Activated B cell treated with CpG ODN at 0.5 μM for 24 hours (primary cell): ENCODE measurements at regions of chr16 and their contacts with region 1.

Region 1: DNA sequence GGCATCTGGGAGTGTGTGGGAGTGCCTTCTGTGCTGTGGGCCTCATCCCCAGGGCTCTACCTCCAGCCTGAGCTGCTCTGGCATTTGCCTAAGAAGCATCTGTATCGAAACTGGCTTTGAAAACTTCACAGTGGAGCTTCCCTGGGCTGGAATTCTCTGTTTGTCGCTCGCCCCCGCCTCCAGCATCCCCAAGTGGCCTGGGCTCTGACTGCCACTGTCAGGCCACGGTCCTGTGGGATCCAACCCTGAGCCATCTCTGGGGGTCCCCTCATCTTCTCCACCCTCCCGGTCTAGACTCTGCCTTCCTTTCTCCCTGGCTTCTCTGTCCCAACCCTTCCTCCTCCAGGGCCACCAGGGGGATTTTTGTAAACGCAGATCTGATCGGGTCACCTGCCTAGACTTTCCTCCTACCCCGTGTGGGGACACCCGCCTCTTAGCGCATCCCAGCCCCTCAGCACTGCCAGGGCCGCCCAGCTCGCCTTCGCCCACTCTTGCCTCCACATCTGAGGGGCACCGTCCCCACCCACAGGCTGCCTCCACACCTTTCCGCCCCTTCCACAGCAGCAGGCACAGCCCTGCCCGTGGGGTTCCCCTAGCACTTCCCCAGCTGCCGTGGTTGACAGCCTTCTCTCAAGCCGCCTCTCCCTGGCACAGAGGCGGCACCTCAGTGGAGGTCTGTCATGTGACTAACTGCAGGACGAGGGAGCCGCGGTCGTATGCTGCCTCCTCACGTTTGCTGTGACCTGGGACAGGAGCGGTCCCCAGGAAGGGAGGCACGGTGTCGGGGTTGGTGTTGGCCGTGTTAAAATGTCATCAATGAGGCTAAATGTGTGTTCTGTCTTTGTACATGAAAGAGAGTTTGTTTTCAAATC is 12.0 kb downstream of the TBC1D24 start:
- DNase-seq: peak; percentile 73
- ATAC-seq: peak; percentile 97
- H3K4me3 Mint-ChIP-seq: peak overlapping the region; percentile 71
- H3K27ac Mint-ChIP-seq: peak overlapping the region; percentile 83
- H3K4me1 Mint-ChIP-seq: peaks cover 26% of the 10 kb centered on the region
- H3K27me3 Mint-ChIP-seq: no peaks in the 10 kb centered on the region
- CTCF ChIP-seq: no peak

Region 2: GRCh38 chr16:2194852-2195321 is 292.0 kb before region 1 on chr16:
- CTCF ChIA-PET with region 1: interaction called, 13 read pairs
- POLR2A ChIA-PET with region 1: interaction called, 3 read pairs
- intact Hi-C with region 1: loop called (anchors 1 kb)
- DNase-seq: no peak
- ATAC-seq: peak; percentile 76
- H3K4me3 Mint-ChIP-seq: peak overlapping the region; percentile 56
- H3K27ac Mint-ChIP-seq: no peak overlapping the region
- H3K4me1 Mint-ChIP-seq: peaks cover 8% of the 10 kb centered on the region
- H3K27me3 Mint-ChIP-seq: peaks cover 19% of the 10 kb centered on the region
- CTCF ChIP-seq: no peak

Region 3: GRCh38 chr16:2267913-2268666 is 218.8 kb before region 1 on chr16 and contains the start of gene RNPS1:
- CTCF ChIA-PET with region 1: no interaction called
- POLR2A ChIA-PET with region 1: no interaction called
- intact Hi-C with region 1: loop called (anchors 1 kb)
- DNase-seq: peak; percentile 98
- ATAC-seq: peak; percentile 91
- H3K4me3 Mint-ChIP-seq: peak within 1 kb of the TSS; percentile 93
- H3K27ac Mint-ChIP-seq: peak within 1 kb of the TSS; percentile 98
- H3K4me1 Mint-ChIP-seq: peaks cover 43% of the 10 kb centered on the region
- H3K27me3 Mint-ChIP-seq: no peaks in the 10 kb centered on the region
- CTCF ChIP-seq: no peak
- total RNA-seq, gene RNPS1: 228 and 232 TPM in 2 replicates

Region 4: GRCh38 chr16:2340564-2341455 is 146.1 kb before region 1 on chr16 and contains the start of gene ABCA3:
- CTCF ChIA-PET with region 1: no interaction called
- POLR2A ChIA-PET with region 1: no interaction called
- intact Hi-C with region 1: loop called (anchors 1 kb)
- DNase-seq: peak; percentile 99
- ATAC-seq: peak; percentile 84
- H3K4me3 Mint-ChIP-seq: peak within 1 kb of the TSS; percentile 79
- H3K27ac Mint-ChIP-seq: peak within 1 kb of the TSS; percentile 66
- H3K4me1 Mint-ChIP-seq: peaks cover 13% of the 10 kb centered on the region
- H3K27me3 Mint-ChIP-seq: no peaks in the 10 kb centered on the region
- CTCF ChIP-seq: peak; percentile 95
- total RNA-seq, gene ABCA3: 2.4 and 3.1 TPM in 2 replicates

Region 5: DNA sequence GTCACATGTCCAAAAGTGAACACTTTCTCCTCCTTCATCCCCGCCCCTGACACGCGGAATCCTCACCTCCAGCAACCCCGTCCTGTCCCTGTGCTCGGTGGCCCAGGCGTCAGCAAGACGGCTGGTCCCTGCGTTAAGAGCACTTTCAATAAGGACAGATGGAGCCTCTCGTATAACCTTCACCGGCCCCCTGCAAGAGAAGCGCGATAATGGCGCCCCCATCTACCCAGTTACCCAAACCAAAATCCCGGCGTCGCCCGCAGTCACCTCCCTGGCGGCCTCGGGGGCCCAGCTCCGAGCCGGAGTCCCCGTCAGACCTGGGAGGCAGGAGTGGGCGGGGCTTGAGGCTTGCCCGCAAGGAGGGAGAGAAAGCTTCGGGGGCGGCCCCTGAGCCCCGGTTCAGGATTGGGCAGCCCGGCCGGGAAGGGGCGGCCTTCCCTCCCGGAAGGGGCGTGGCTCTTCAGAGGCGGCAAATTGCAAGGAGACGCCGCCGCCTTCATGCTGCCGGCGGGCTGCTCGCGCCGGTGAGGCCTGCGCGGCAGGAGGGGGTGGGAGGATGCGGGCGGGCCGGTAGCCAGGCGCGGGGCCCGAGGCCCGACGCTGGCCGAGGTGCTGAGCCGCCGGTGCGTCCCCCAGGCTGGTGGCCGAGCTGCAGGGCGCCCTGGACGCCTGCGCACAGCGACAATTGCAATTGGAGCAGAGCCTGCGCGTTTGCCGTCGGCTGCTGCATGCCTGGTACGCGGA is 27.1 kb before region 1 on chr16 and contains the start of gene TEDC2:
- CTCF ChIA-PET with region 1: no interaction called
- POLR2A ChIA-PET with region 1: interaction called, 6 read pairs
- intact Hi-C with region 1: loop called (anchors 1 kb)
- DNase-seq: peak; percentile 91
- ATAC-seq: peak; percentile 100
- H3K4me3 Mint-ChIP-seq: peak within 1 kb of the TSS; percentile 86
- H3K27ac Mint-ChIP-seq: peak within 1 kb of the TSS; percentile 73
- H3K4me1 Mint-ChIP-seq: peaks cover 9% of the 10 kb centered on the region
- H3K27me3 Mint-ChIP-seq: no peaks in the 10 kb centered on the region
- CTCF ChIP-seq: no peak
- total RNA-seq, gene TEDC2: 3.4 and 4.4 TPM in 2 replicates

Region 6: GRCh38 chr16:2474877-2475412 is 11.9 kb before region 1 on chr16 and contains the start of gene TBC1D24:
- CTCF ChIA-PET with region 1: interaction called, 4 read pairs
- POLR2A ChIA-PET with region 1: interaction called, 14 read pairs
- intact Hi-C with region 1: loop called (anchors 1 kb)
- DNase-seq: peak; percentile 89
- ATAC-seq: peak; percentile 79
- H3K4me3 Mint-ChIP-seq: peak within 1 kb of the TSS; percentile 83
- H3K27ac Mint-ChIP-seq: no peak within 1 kb of the TSS
- H3K4me1 Mint-ChIP-seq: peaks cover 25% of the 10 kb centered on the region
- H3K27me3 Mint-ChIP-seq: peaks cover 10% of the 10 kb centered on the region
- CTCF ChIP-seq: no peak
- total RNA-seq, gene TBC1D24: 9.1 and 12.6 TPM in 2 replicates

Region 7: GRCh38 chr16:2980227-2981086 is 493.6 kb after region 1 on chr16 and contains the start of gene PKMYT1:
- CTCF ChIA-PET with region 1: no interaction called
- POLR2A ChIA-PET with region 1: interaction called, 11 read pairs
- intact Hi-C with region 1: no loop called
- DNase-seq: peak; percentile 97
- ATAC-seq: peak; percentile 90
- H3K4me3 Mint-ChIP-seq: peak within 1 kb of the TSS; percentile 84
- H3K27ac Mint-ChIP-seq: peak within 1 kb of the TSS; percentile 78
- H3K4me1 Mint-ChIP-seq: peaks cover 27% of the 10 kb centered on the region
- H3K27me3 Mint-ChIP-seq: no peaks in the 10 kb centered on the region
- CTCF ChIP-seq: no peak
- total RNA-seq, gene PKMYT1: 3.8 and 4.3 TPM in 2 replicates